ENCODE measurements at regions of chr20 and their contacts with region 1.

Region 1: GRCh38 chr20:50120897-50121693 is 8.1 kb upstream of the UBE2V1 start:
- DNase-seq: peak; percentile 67
- H3K4me3 ChIP-seq: no peak overlapping the region
- H3K27ac ChIP-seq: no peak overlapping the region
- H3K4me1 ChIP-seq: peaks cover 1% of the 10 kb centered on the region
- H3K27me3 ChIP-seq: no peaks in the 10 kb centered on the region
- CTCF ChIP-seq: peak; percentile 78 to 97
- POLR2A ChIP-seq: peak; percentile 39

Region 2: GRCh38 chr20:50085452-50086365 is 35.4 kb before region 1 on chr20:
- CTCF ChIA-PET with region 1: interaction called, 16 read pairs
- POLR2A ChIA-PET with region 1: no interaction called
- dilution Hi-C with region 1: no loop called
- intact Hi-C with region 1: no loop called
- DNase-seq: peak; percentile 85
- H3K4me3 ChIP-seq: peak overlapping the region in 1 of 3 experiments; percentile 31
- H3K27ac ChIP-seq: peak overlapping the region; percentile 91
- H3K4me1 ChIP-seq: peaks cover 19% of the 10 kb centered on the region
- H3K27me3 ChIP-seq: no peaks in the 10 kb centered on the region
- CTCF ChIP-seq: peak; percentile 71 to 80
- POLR2A ChIP-seq: no peak

Region 3: GRCh38 chr20:50133474-50134217 is 12.6 kb after region 1 on chr20:
- CTCF ChIA-PET with region 1: interaction called, 30 read pairs
- POLR2A ChIA-PET with region 1: interaction called, 4 read pairs
- dilution Hi-C with region 1: no loop called
- intact Hi-C with region 1: no loop called
- DNase-seq: no peak
- H3K4me3 ChIP-seq: no peak overlapping the region
- H3K27ac ChIP-seq: no peak overlapping the region
- H3K4me1 ChIP-seq: peaks cover 7% of the 10 kb centered on the region
- H3K27me3 ChIP-seq: no peaks in the 10 kb centered on the region
- CTCF ChIP-seq: peak; percentile 21 to 25
- POLR2A ChIP-seq: no peak

Region 4: GRCh38 chr20:50138479-50139393 is 17.6 kb after region 1 on chr20:
- CTCF ChIA-PET with region 1: interaction called, 30 read pairs
- POLR2A ChIA-PET with region 1: interaction called, 4 read pairs
- dilution Hi-C with region 1: no loop called
- intact Hi-C with region 1: no loop called
- DNase-seq: no peak
- H3K4me3 ChIP-seq: no peak overlapping the region
- H3K27ac ChIP-seq: peak overlapping the region; percentile 3
- H3K4me1 ChIP-seq: peaks cover 39% of the 10 kb centered on the region
- H3K27me3 ChIP-seq: no peaks in the 10 kb centered on the region
- CTCF ChIP-seq: peak in 1 of 2 donors; percentile 21
- POLR2A ChIP-seq: no peak

Region 5: DNA sequence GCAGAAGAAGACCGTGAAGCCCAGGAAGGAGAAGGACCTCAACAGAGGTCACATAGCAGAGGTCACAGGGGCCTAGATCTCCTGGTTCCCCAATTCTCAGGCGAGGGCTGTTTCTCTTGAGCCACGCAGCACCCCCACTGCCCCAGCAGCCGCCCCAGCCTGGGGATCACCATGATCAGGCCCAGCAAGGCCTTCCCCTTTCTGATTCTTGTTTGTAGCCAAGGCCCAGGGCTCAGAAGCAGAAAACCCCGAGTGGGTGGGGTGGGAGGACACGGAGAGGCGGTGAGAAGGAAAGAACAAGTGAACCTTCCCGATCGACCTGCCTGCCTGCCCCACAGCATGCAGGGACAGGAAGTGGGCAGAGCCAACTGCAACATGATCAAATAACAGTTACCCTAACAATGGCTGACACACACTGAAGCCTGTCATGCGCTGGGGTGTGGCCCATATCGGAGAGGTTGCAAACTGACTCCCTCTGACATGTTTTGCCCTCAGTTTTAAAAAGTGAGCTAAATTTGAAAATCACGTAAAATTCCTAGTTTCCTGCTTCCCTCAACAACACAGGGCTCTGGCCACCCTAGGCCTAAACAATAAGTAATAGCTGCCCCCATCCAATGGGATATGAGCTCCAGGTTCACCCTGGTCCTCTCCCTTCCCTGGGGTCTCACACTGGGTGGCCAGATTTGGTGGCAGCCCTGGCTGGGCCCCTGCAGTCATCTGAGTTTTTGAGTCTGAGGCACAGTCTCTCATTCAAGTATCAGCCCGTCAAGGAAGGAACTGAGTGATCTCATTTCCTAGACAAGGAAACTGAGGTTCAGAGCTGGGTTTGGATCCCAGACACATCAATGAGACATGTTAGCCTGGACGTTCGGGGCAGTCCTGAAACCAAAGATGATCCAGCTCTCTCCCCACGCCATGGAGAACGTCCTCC is 25.9 kb after region 1 on chr20:
- CTCF ChIA-PET with region 1: interaction called, 41 read pairs
- POLR2A ChIA-PET with region 1: interaction called, 5 read pairs
- dilution Hi-C with region 1: no loop called
- intact Hi-C with region 1: no loop called
- DNase-seq: peak; percentile 84
- H3K4me3 ChIP-seq: peak overlapping the region in 1 of 3 experiments; percentile 14
- H3K27ac ChIP-seq: peak overlapping the region; percentile 96
- H3K4me1 ChIP-seq: peaks cover 82% of the 10 kb centered on the region
- H3K27me3 ChIP-seq: no peaks in the 10 kb centered on the region
- CTCF ChIP-seq: no peak
- POLR2A ChIP-seq: peak; percentile 83

Region 6: DNA sequence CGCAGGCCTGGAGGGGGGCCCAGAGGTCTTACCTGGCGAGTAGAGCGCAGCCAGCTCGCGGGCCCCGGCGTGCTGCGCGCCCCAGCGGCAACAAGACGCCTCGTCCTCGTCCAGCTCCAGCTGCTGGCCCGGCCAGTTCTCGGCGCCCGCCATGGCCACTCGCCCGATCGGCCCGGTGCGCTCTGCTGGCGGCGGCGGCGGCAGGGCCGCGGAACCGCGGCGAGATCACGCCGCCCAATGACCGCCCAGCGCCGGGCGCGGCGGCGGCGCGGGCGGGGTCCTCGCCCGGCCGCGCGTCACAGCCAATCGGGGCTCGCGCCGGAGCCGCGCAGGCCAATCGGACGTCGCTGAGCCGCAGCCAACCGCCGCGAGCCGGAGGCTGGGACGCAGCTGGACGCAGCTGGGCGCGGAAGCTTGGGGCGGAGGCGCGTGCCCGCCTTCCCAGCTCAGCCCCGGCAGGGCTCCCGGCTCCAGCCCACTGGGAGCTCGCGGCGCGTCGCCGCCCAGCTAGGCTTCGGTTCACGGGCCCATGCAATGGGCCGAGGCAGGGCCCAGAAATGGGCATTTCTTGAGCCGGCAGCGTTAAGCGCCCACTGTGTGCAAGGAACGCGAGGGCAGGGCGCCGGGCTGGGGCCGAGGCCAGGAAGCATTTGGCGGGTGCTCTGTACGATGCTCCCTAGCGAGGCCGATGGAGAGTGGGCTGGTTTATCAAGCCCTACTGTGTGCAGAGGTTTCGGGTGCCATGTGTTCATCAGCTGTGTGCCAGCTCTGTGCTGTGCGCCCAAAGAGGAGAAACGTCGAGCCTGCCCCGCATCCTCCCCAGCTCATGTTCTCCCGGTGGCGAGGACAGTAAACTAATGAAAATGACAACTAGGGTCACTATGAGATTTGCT is 32.6 kb after region 1 on chr20 and contains the start of gene PEDS1:
- CTCF ChIA-PET with region 1: interaction called, 41 read pairs
- POLR2A ChIA-PET with region 1: interaction called, 6 read pairs
- dilution Hi-C with region 1: no loop called
- intact Hi-C with region 1: no loop called
- DNase-seq: peak; percentile 88
- H3K4me3 ChIP-seq: peak within 1 kb of the TSS; percentile 53 to 86 (median 80)
- H3K27ac ChIP-seq: peak within 1 kb of the TSS; percentile 77
- H3K4me1 ChIP-seq: peaks cover 39% of the 10 kb centered on the region
- H3K27me3 ChIP-seq: no peaks in the 10 kb centered on the region
- CTCF ChIP-seq: no peak
- POLR2A ChIP-seq: peak; percentile 90
- total RNA-seq, gene PEDS1: 62.7 and 71.9 TPM in 2 replicates

Region 7: DNA sequence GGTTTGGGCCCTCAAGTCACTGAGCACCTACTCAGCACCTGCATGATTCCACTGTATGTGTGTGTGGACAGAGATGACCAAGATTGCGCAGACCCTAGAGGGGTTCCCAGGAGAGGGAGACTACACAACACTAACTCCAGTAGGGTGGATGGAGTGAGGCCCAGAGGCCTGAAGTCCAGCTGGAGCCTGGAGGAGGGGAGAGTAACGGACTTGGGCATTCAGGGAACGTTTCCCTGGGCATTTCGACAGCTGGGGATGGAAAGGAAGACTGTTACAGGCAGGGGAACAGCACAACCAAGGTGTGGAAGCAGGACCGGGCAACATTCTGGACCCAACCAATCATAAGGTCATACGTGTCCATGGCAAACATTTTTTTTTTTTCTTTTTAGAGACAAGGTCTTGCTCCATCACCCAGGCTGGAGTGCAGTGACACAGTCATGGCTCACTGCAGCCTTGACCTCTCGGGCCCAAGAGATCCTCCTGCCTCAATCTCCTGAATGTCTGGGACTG is 58.5 kb after region 1 on chr20:
- CTCF ChIA-PET with region 1: interaction called, 129 read pairs
- POLR2A ChIA-PET with region 1: no interaction called
- dilution Hi-C with region 1: no loop called
- intact Hi-C with region 1: no loop called
- DNase-seq: no peak
- H3K4me3 ChIP-seq: no peak overlapping the region
- H3K27ac ChIP-seq: no peak overlapping the region
- H3K4me1 ChIP-seq: no peaks in the 10 kb centered on the region
- H3K27me3 ChIP-seq: no peaks in the 10 kb centered on the region
- CTCF ChIP-seq: no peak
- POLR2A ChIP-seq: no peak

Region 8: GRCh38 chr20:50237349-50238085 is 116.4 kb after region 1 on chr20:
- CTCF ChIA-PET with region 1: no interaction called
- POLR2A ChIA-PET with region 1: no interaction called
- dilution Hi-C with region 1: no loop called
- intact Hi-C with region 1: no loop called
- DNase-seq: no peak
- H3K4me3 ChIP-seq: no peak overlapping the region
- H3K27ac ChIP-seq: no peak overlapping the region
- H3K4me1 ChIP-seq: no peaks in the 10 kb centered on the region
- H3K27me3 ChIP-seq: peaks cover 9 to 12% of the 10 kb centered on the region in 2 experiments
- CTCF ChIP-seq: no peak
- POLR2A ChIP-seq: no peak

Measured in endothelial cell of umbilical vein (primary cell).